BJ (cell line): ENCODE measurements at regions of chr17 and their contacts with region 1.

Region 1: GRCh38 chr17:385926-386876 is 33.6 kb upstream of the RPH3AL start:
- DNase-seq: no peak
- H3K4me3 ChIP-seq: peak overlapping the region; percentile 49
- H3K27me3 ChIP-seq: 0 out of 2 replicates have a peak, but pooled peaks cover 2% of the 10 kb centered on the region
- CTCF ChIP-seq: peak; percentile 41

Region 2: DNA sequence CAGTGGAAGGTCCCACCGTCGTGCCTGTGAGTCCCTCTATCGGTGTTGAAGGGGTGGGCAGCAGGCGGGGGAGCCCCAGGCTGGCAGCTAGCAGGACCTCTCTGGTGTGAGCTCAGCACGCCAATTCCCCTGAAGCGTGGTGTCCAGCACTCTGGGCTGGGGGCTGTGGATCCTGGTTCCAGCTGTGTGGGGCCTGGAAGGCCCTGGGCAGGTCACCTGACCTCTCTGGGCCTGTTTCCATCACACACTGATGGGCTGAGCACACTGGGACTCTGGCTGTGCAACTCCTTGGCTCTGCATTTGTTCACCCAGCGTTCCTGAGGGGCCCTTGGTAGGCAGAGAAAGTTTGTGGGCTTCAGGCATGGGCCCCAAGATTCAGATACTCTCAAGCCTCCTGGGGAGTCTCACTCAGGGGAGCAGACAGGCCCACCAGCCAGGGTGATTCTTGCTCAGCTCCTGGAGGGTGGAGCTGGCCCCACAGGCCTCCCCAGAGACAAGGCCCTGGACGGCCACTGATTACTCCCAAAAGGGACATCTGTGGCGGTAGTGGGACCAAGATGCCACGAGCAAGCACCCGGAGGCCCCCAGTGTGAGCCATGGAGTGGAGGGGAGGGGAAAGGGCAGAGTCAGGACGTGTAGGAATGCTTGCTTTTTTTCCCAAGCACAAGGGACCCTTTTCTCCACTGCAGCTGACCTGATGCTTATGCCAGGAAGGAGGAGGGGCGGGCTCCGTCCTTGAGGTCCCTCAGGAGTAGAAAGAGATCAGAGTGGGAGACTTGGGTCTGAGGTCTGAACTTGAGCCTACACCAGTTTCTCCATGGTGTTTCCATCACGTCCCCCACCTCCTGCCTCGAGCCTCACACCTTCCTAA is 240.3 kb before region 1 on chr17:
- CTCF ChIA-PET with region 1: interaction called, 11 read pairs
- POLR2A ChIA-PET with region 1: no interaction called
- DNase-seq: no peak
- H3K4me3 ChIP-seq: no peak overlapping the region
- H3K27me3 ChIP-seq: 0 out of 2 replicates have a peak, but pooled peaks cover 2% of the 10 kb centered on the region
- CTCF ChIP-seq: no peak

Region 3: DNA sequence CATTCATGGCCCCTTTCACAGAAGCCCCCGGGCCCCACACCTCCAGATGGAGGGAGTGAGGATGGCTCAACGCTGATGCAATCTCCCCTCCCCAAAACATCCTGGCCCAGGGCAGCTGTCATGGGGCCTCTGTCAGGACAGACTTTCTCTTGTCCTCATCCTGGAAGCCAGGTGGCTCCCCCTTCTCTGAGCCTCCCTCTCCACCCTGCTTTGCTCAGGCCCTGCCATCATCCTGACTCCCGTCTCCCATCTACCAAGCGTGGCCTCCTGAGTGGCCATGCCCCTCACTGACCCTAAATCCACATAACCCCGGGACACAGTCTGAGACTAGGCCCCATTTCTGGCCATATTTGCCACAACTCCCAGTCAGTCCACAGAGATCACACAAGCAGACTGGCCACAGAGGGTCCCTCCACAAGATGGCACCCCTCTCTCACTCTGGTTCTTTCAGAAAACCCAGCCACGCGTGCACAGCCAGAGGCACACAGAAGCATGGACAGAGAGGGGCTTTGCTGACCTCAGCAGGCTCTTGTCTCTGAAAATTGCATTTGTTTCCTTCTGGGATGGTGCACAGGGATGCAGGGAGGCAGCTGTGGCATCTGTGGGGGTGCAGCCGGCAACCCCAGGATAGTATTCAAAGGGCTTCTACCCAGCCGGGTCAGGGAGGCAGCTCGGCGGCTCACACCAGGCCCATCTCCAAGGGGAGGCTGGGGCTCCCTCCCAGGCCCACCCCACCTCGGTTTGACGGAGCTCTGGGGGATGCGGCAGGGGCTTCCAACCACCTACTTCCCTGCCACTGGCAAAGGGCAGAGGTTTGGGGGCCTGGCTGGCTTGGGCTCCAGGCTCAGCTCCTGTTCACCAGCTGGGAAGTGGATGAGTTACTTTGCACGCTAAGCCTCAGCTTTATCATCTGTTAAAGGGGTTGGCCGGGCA is 221.6 kb before region 1 on chr17:
- CTCF ChIA-PET with region 1: interaction called, 26 read pairs
- POLR2A ChIA-PET with region 1: no interaction called
- DNase-seq: no peak
- H3K4me3 ChIP-seq: no peak overlapping the region
- H3K27me3 ChIP-seq: peaks cover 2% of the 10 kb centered on the region; the same call in 1 of the 2 replicates
- CTCF ChIP-seq: peak; percentile 55